ENCODE measurements at regions of chr3 and their contacts with region 1.

Region 1: GRCh38 chr3:130892759-130893375 is 1.0 kb upstream of the ATP2C1 start:
- DNase-seq: peak; percentile 79
- ATAC-seq: peak; percentile 56
- H3K4me3 Mint-ChIP-seq: peak overlapping the region; percentile 94
- H3K27ac Mint-ChIP-seq: peak overlapping the region; percentile 99
- H3K4me1 Mint-ChIP-seq: peaks cover 34% of the 10 kb centered on the region
- H3K27me3 Mint-ChIP-seq: no peaks in the 10 kb centered on the region

Region 2: GRCh38 chr3:130111185-130111864 is 781.5 kb before region 1 on chr3:
- CTCF ChIA-PET with region 1: interaction called, 3 read pairs
- POLR2A ChIA-PET with region 1: no interaction called
- intact Hi-C with region 1: loop called in 1 of 2 experiments (anchors 1 kb)
- DNase-seq: peak; percentile 100
- ATAC-seq: peak; percentile 100
- H3K4me3 Mint-ChIP-seq: peak overlapping the region; percentile 92
- H3K27ac Mint-ChIP-seq: peak overlapping the region; percentile 98
- H3K4me1 Mint-ChIP-seq: peaks cover 16% of the 10 kb centered on the region
- H3K27me3 Mint-ChIP-seq: no peaks in the 10 kb centered on the region

Region 3: GRCh38 chr3:130699765-130700164 is 193.1 kb before region 1 on chr3:
- CTCF ChIA-PET with region 1: no interaction called
- POLR2A ChIA-PET with region 1: interaction called, 7 read pairs
- intact Hi-C with region 1: loop called (anchors 1 to 2 kb)
- DNase-seq: no peak
- ATAC-seq: peak; percentile 36
- H3K4me3 Mint-ChIP-seq: no peak overlapping the region
- H3K27ac Mint-ChIP-seq: no peak overlapping the region
- H3K4me1 Mint-ChIP-seq: no peaks in the 10 kb centered on the region
- H3K27me3 Mint-ChIP-seq: no peaks in the 10 kb centered on the region

Region 4: GRCh38 chr3:130759699-130760338 is 133.0 kb before region 1 on chr3:
- CTCF ChIA-PET with region 1: interaction called, 43 read pairs
- POLR2A ChIA-PET with region 1: interaction called, 4 read pairs
- intact Hi-C with region 1: loop called (anchors 1 kb)
- DNase-seq: peak; percentile 72
- ATAC-seq: peak; percentile 86
- H3K4me3 Mint-ChIP-seq: no peak overlapping the region
- H3K27ac Mint-ChIP-seq: no peak overlapping the region
- H3K4me1 Mint-ChIP-seq: no peaks in the 10 kb centered on the region
- H3K27me3 Mint-ChIP-seq: peaks cover 3% of the 10 kb centered on the region

Region 5: GRCh38 chr3:130907966-130908365 is 15.1 kb after region 1 on chr3:
- CTCF ChIA-PET with region 1: interaction called, 3 read pairs
- POLR2A ChIA-PET with region 1: no interaction called
- intact Hi-C with region 1: loop called in 1 of 2 experiments (anchors 1 kb)
- DNase-seq: no peak
- ATAC-seq: peak; percentile 93
- H3K4me3 Mint-ChIP-seq: no peak overlapping the region
- H3K27ac Mint-ChIP-seq: peak overlapping the region; percentile 31
- H3K4me1 Mint-ChIP-seq: peaks cover 40% of the 10 kb centered on the region
- H3K27me3 Mint-ChIP-seq: no peaks in the 10 kb centered on the region

Region 6: GRCh38 chr3:131381444-131382291 is 488.8 kb after region 1 on chr3 and contains the start of gene NUDT16:
- CTCF ChIA-PET with region 1: no interaction called
- POLR2A ChIA-PET with region 1: no interaction called
- intact Hi-C with region 1: loop called in 1 of 2 experiments (anchors 1 kb)
- DNase-seq: peak; percentile 98
- ATAC-seq: peak; percentile 100
- H3K4me3 Mint-ChIP-seq: peak within 1 kb of the TSS; percentile 90
- H3K27ac Mint-ChIP-seq: peak within 1 kb of the TSS; percentile 91
- H3K4me1 Mint-ChIP-seq: peaks cover 22% of the 10 kb centered on the region
- H3K27me3 Mint-ChIP-seq: no peaks in the 10 kb centered on the region
- total RNA-seq, gene NUDT16: 4.0 to 5.7 TPM

Region 7: GRCh38 chr3:131485119-131485518 is 592.3 kb after region 1 on chr3:
- CTCF ChIA-PET with region 1: no interaction called
- POLR2A ChIA-PET with region 1: no interaction called
- intact Hi-C with region 1: no loop called
- DNase-seq: no peak
- ATAC-seq: no peak
- H3K4me3 Mint-ChIP-seq: no peak overlapping the region
- H3K27ac Mint-ChIP-seq: no peak overlapping the region
- H3K4me1 Mint-ChIP-seq: peaks cover 17% of the 10 kb centered on the region
- H3K27me3 Mint-ChIP-seq: no peaks in the 10 kb centered on the region

Region 8: DNA sequence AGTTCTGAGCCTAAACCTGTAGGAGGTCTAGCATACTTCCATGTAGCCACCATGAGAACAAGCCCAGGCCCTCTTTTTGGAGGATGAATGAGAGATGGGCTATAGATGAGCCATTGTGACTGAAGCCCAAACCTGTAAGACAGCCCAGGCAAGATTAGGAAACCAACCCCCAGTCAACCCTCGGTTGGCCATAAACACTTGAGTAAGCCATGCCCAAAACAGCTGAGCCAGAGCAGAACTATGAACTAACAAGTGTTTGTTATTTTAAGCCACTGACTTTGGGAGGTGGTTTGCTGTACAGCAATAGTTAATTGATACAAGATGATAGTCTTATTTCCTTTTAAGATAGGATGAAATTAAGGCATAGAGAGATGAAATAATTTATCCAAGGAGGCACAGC is 1154.3 kb after region 1 on chr3:
- CTCF ChIA-PET with region 1: no interaction called
- POLR2A ChIA-PET with region 1: no interaction called
- intact Hi-C with region 1: no loop called
- DNase-seq: no peak
- ATAC-seq: no peak
- H3K4me3 Mint-ChIP-seq: no peak overlapping the region
- H3K27ac Mint-ChIP-seq: no peak overlapping the region
- H3K4me1 Mint-ChIP-seq: no peaks in the 10 kb centered on the region
- H3K27me3 Mint-ChIP-seq: no peaks in the 10 kb centered on the region